ENCODE measurements at regions of chr11 and their contacts with region 1.

Region 1: DNA sequence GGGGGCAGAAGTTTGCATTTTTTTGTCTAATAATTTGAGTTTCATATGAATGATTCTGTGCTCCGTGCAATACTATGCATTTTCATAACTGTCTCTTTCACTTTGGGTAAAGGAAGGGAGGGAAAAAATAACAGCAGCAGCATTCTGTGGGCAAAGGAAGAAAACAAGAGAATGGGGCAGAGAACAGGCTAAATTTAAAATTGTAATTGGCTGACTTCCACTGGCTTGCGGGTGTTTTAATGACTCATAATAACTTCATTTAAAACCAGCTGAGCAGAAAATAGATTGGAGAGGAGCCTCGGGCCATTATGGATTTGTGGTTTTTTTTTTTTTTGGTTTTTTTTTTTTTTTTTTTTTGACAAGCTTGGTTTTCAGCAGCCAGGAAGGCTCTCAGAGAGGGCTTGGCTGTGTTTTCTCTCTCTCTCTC is 107.4 kb downstream of the ZBTB16 start:
- DNase-seq: peak in 2 of 35 experiments; percentile 18 to 57
- ATAC-seq: peak; percentile 64 to 78 (median 68)
- H3K4me3 ChIP-seq: no peak overlapping the region
- H3K4me3 Mint-ChIP-seq: peak overlapping the region; percentile 17 to 68 (median 44)
- H3K27ac ChIP-seq: peak overlapping the region; percentile 38
- H3K27ac Mint-ChIP-seq: peak overlapping the region; percentile 79 to 82
- H3K4me1 ChIP-seq: peaks cover 47 to 78% of the 10 kb centered on the region in 2 experiments
- H3K4me1 Mint-ChIP-seq: peaks cover 88 to 98% (median 98%) of the 10 kb centered on the region in 3 donors
- H3K27me3 ChIP-seq: no peaks in the 10 kb centered on the region
- H3K27me3 Mint-ChIP-seq: no peaks in the 10 kb centered on the region

Region 2: GRCh38 chr11:114225661-114226060 is 58.8 kb after region 1 on chr11:
- CTCF ChIA-PET with region 1: interaction called in 1 of 2 experiments, 10 read pairs
- POLR2A ChIA-PET with region 1: no interaction called
- DNase-seq: no peak
- ATAC-seq: no peak
- H3K4me3 ChIP-seq: no peak overlapping the region
- H3K4me3 Mint-ChIP-seq: no peak overlapping the region
- H3K27ac ChIP-seq: no peak overlapping the region
- H3K27ac Mint-ChIP-seq: no peak overlapping the region
- H3K4me1 ChIP-seq: peaks cover 0 to 6% of the 10 kb centered on the region in 2 experiments
- H3K4me1 Mint-ChIP-seq: peaks cover 9 to 22% (median 17%) of the 10 kb centered on the region in 3 donors
- H3K27me3 ChIP-seq: no peaks in the 10 kb centered on the region
- H3K27me3 Mint-ChIP-seq: no peaks in the 10 kb centered on the region

Measured in T-cell (primary cell).